Activated CD4-positive, alpha-beta memory T cell treated with anti-CD3 and anti-CD28 coated beads, Interleukin-2, amount 10 ng/mL, durations not matched to agents 7 days and 5 days (primary cell): ENCODE measurements at regions of chr10 and their contacts with region 1.

Region 1: DNA sequence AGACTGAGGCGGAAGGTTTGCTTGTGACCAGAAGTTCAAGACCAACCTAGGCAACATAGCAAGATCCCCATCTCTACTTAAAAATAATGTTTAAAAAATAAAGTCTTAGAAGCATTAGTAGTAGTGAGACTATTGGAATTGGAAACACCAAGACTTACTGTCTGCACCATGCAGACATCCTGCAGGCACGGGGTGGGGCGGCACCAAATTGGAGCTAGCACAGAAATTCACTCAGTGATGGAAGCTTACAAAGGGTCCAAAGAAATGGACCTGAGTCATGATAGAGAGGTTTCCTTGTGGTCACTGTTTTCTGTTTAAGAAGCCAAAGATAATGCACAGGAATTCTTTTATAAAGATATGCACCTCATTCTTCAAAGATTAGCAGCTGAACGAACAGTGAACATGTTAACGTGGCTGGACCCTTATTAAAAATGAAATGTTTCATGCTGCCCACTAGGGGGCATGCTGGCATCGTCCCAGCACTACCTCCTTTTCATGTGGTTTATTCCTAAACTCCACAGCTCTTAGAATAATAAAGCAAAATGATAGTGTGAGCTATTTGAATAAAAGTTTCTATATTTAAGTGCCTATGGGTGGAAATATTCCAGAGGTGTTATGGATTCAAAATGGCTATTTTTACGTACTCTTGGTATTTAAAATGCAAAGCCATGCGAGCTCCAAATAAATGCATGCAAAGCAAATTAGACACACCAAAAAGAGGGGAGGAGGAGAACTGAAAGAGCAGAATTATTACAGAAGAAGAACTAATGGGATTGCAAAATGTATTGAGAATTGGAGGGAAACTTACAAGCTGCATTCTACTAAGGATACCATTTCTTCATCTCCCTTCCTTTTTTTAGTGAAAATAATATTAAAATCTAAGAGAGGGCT is 28.6 kb downstream of the PDSS1 start:
- DNase-seq: peak; percentile 60
- H3K4me3 Mint-ChIP-seq: no peak overlapping the region
- H3K27ac Mint-ChIP-seq: no peak overlapping the region
- H3K4me1 Mint-ChIP-seq: peaks cover 22% of the 10 kb centered on the region
- H3K27me3 Mint-ChIP-seq: no peaks in the 10 kb centered on the region

Region 2: DNA sequence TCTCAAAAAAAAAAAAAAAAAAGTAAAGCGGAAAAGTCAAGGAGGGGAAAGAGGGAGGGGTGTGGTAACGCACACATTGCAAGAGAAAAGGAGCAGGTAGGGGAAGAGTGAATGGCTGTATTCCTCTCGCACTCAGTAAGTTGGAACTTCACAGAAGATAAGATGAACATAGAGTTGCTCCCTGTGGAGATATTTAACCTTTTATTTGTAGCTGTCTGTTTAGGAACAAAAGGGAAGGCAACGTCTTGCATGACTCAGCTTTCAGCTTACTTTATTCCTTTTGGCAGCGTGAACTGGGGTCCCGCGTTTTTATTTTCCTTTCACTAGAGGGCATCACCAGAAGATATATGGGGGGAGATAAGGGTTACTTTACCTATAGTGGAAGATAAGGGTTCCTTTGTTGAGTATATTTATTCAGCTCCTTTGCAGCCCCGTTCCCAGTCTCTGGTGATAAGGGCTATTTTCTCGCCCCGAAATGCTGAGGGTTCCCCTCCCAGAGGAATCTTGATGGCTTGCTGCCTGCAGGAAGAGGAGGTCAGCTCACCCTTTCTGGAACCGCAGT is 209.5 kb before region 1 on chr10:
- CTCF ChIA-PET with region 1: no interaction called
- POLR2A ChIA-PET with region 1: no interaction called
- DNase-seq: no peak
- H3K4me3 Mint-ChIP-seq: no peak overlapping the region
- H3K27ac Mint-ChIP-seq: no peak overlapping the region
- H3K4me1 Mint-ChIP-seq: no peaks in the 10 kb centered on the region
- H3K27me3 Mint-ChIP-seq: no peaks in the 10 kb centered on the region

Region 3: DNA sequence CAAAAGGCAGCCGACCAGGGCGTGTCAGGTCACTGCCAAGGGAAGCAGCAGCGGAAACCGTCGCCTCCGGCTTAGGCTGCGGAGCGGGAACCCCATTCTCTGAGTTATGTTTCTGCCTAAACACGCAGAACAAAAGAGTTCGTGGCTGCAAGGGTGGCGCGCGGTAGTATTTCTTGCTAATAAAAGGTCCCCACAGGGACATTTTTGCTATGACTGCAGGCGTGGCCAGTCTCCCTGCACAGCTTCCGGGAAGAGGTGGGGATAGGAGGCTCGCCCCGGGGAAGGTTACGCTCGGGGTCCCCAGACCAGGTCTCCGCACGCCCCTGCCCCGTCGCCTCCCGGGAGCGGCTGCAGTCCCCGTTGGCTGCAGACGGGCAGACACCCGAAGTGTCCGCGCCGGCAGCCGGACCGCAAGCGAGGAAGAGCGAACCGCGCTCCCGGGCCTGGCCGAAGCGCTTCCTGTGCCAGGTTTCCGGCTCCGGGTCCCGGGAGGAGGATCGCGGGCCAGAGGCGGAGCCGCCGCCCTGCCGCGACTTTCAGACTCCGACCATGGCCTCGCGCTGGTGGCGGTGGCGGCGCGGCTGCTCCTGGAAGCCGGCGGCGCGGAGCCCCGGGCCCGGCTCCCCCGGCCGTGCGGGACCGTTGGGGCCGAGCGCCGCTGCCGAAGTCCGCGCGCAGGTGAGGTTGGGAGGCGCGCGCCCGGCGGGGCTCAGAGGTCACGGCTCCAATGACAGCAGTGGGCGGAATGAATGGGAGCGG is 28.7 kb before region 1 on chr10 and contains the start of gene PDSS1:
- CTCF ChIA-PET with region 1: interaction called, 14 read pairs
- POLR2A ChIA-PET with region 1: interaction called, 9 read pairs
- DNase-seq: peak; percentile 71
- H3K4me3 Mint-ChIP-seq: peak within 1 kb of the TSS; percentile 95
- H3K27ac Mint-ChIP-seq: peak within 1 kb of the TSS; percentile 94
- H3K4me1 Mint-ChIP-seq: peaks cover 37% of the 10 kb centered on the region
- H3K27me3 Mint-ChIP-seq: no peaks in the 10 kb centered on the region
- total RNA-seq, gene PDSS1: 10.7 to 12.9 TPM

Region 4: DNA sequence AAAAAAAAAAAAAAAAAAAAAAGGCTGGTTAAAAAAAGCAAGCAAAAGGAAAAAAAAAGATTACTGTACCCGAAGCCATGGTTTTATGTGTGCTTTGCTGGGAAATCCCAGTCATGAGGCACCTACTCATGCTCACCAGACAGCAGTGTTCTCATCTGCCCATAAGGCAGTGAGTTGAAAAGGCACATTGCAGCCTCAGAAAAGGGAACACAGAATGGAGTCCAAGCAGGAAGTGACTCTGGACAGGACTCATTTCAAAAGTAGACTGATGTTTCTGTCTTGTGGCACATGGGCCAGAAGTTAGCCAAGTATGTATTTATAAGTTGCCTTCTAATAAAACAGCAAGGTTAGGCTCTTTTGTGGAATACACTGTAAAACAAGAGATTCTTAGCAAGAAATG is 11.6 kb after region 1 on chr10:
- CTCF ChIA-PET with region 1: interaction called, 20 read pairs
- POLR2A ChIA-PET with region 1: interaction called, 4 read pairs
- DNase-seq: peak; percentile 60
- H3K4me3 Mint-ChIP-seq: no peak overlapping the region
- H3K27ac Mint-ChIP-seq: peak overlapping the region; percentile 90
- H3K4me1 Mint-ChIP-seq: peaks cover 67% of the 10 kb centered on the region
- H3K27me3 Mint-ChIP-seq: no peaks in the 10 kb centered on the region

Region 5: GRCh38 chr10:26860443-26861204 is 134.5 kb after region 1 on chr10 and contains the start of gene ABI1:
- CTCF ChIA-PET with region 1: interaction called, 36 read pairs
- POLR2A ChIA-PET with region 1: interaction called, 13 read pairs
- DNase-seq: peak; percentile 98
- H3K4me3 Mint-ChIP-seq: peak within 1 kb of the TSS; percentile 100
- H3K27ac Mint-ChIP-seq: peak within 1 kb of the TSS; percentile 100
- H3K4me1 Mint-ChIP-seq: peaks cover 30% of the 10 kb centered on the region
- H3K27me3 Mint-ChIP-seq: peaks cover 11% of the 10 kb centered on the region
- total RNA-seq, gene ABI1: 76.9 to 78.4 TPM

Region 6: GRCh38 chr10:26881600-26882331 is 155.7 kb after region 1 on chr10:
- CTCF ChIA-PET with region 1: interaction called, 116 read pairs
- POLR2A ChIA-PET with region 1: interaction called, 6 read pairs
- DNase-seq: no peak
- H3K4me3 Mint-ChIP-seq: no peak overlapping the region
- H3K27ac Mint-ChIP-seq: no peak overlapping the region
- H3K4me1 Mint-ChIP-seq: peaks cover 7% of the 10 kb centered on the region
- H3K27me3 Mint-ChIP-seq: peaks cover 30% of the 10 kb centered on the region

Region 7: GRCh38 chr10:26909746-26910145 is 183.7 kb after region 1 on chr10:
- CTCF ChIA-PET with region 1: no interaction called
- POLR2A ChIA-PET with region 1: no interaction called
- DNase-seq: no peak
- H3K4me3 Mint-ChIP-seq: no peak overlapping the region
- H3K27ac Mint-ChIP-seq: no peak overlapping the region
- H3K4me1 Mint-ChIP-seq: no peaks in the 10 kb centered on the region
- H3K27me3 Mint-ChIP-seq: peaks cover 6% of the 10 kb centered on the region